ENCODE measurements at regions of chr19 and their contacts with region 1.

Region 1: DNA sequence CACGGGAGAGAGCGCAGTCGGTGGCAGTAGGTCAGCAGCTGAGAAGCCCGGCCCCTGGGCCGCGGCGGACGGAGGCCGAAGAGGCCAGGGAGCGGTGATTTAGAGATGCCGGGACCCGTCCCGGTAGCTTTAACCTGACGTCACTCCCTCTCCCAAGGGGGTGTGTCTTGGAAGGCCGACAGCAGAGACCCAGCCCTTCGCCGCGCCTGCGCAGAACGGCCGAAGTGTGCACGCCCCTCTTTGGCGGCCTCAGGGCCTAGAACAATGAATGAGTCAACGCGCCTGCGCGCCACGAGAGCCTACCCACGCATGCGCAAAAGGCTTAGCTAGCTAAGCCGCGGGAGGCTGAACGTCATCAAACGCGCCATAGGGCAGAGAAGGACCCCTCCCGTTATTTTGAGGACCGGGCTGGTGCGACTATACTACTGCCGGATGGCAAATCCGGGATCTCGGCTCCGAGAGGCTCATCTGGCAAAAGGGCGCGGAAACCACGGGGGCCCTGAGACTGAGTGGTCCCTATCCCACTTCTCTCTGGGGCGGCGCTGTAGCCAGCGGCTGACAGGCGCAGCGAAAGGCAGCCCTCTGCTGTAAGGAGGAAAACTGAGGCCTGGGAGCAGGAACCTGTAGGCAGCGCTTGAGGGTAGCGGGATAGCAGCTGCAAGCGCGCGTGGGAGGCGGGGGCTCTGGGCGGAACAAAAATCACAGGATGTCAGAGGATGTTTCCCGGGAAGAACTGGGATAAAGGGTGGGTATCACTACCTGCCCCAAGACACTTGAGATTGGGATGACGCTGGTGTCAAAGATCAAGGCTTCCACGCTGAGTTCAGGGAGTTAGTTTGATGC is at the starts of genes IRGQ and ZNF576:
- DNase-seq: peak; percentile 99
- H3K4me3 ChIP-seq: peak within 1 kb of the TSS; percentile 50 to 98
- H3K4me3 Mint-ChIP-seq: peak within 1 kb of the TSS; percentile 93 to 98 (median 95)
- H3K27ac ChIP-seq: peak within 1 kb of the TSS; percentile 93
- H3K27ac Mint-ChIP-seq: peak within 1 kb of the TSS; percentile 100
- H3K4me1 ChIP-seq: peaks cover 26% of the 10 kb centered on the region
- H3K4me1 Mint-ChIP-seq: peaks cover 24 to 49% (median 35%) of the 10 kb centered on the region in 4 donors
- H3K27me3 ChIP-seq: no peaks in the 10 kb centered on the region
- H3K27me3 Mint-ChIP-seq: no peaks in the 10 kb centered on the region
- total RNA-seq, gene IRGQ: 16.5 to 17.9 TPM
- total RNA-seq, gene ZNF576: 18.4 to 18.6 TPM

Region 2: DNA sequence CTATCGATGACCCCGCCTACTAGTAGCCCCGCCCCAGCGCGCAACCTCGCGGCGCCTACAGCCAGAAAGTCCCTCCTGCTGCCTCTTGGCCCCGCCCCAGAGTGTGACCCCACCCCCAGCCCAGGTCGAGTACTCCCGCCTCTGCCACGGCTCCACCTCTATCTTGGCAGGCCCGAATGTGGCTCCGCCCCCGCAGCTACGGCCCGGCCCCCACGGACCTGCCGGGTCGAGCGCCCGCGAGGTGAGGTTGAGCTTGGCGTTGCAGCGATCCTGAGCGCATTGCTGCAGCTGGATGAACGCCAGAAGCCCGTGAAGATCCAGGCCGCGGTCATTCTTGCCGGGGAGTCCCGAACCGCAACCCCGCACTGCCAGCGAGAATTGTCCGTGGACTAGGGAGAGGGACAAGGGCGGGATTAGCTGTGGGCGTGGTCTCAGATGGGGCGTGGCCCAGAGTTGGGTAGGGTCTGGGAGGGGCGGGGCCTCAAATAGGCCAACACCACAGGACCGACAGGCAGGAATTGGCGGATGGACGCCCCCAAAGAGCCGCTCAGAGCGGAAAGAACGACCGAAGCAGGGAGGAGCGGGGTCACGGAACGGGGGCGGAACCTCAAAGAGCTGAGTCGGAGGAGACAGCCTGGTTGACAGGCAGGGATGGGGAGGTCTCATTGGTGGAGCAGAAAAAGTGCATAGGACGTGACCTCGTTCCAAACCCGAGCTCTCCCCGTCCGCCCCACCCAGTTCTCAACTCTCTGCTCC is 132.7 kb before region 1 on chr19:
- CTCF ChIA-PET with region 1: interaction called, 8 read pairs
- POLR2A ChIA-PET with region 1: interaction called, 25 read pairs
- intact Hi-C with region 1: loop called (anchors 5 kb)
- DNase-seq: peak; percentile 98 to 100 (median 98)
- H3K4me3 ChIP-seq: peak overlapping the region; percentile 79 to 98
- H3K4me3 Mint-ChIP-seq: peak overlapping the region; percentile 90 to 98 (median 94)
- H3K27ac ChIP-seq: peak overlapping the region; percentile 80
- H3K27ac Mint-ChIP-seq: peak overlapping the region; percentile 95 to 100 (median 99)
- H3K4me1 ChIP-seq: peaks cover 34% of the 10 kb centered on the region
- H3K4me1 Mint-ChIP-seq: peaks cover 25 to 64% (median 43%) of the 10 kb centered on the region in 4 donors
- H3K27me3 ChIP-seq: no peaks in the 10 kb centered on the region
- H3K27me3 Mint-ChIP-seq: no peaks in the 10 kb centered on the region

Region 3: DNA sequence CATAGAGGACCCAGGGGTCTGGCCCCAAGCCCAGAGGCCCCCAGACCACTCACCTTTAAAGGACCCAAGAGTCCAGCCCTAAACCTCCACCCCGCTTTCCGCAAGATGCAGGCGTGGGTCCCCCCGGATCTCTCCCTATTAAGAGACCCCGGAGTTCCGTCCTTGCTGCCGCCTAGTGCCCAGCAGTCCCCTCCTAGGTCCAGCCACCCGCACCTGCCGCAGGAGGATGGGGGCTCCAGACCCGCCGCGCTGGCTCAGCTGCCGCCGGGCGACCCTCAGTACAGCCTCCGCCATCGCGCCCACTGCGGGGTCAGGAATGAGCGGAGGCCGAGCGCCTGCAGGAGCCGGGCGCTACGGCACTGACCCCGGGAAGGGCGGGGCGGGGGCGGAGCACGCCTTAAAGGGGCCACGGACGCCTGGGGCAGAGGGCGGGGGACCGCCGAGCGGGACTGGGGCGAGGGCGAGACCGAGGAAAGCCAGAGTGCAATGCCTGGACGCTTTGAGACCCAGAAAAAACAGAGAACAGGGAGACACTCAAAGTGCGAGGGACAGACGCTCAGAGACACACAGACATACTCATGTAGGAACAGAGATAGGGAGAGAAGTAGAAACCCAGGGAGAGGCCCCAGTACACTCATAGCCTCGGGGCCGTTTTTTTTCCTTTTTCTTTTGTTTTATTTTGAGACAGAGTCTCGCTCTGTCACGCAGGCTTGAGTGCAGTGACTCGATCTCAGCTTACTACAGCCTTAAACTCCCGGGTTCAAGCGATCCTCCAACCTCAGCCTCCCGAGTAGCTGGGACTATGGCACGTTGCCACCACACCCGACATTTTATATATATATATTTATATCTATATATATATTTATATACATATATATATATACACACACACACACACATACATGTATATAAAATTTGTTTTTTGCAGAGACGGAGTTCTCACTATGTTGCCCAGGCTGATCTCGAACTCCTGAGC is 69.0 kb before region 1 on chr19 and contains the start of gene ETHE1:
- CTCF ChIA-PET with region 1: interaction called, 16 read pairs
- POLR2A ChIA-PET with region 1: interaction called, 31 read pairs
- intact Hi-C with region 1: loop called (anchors 2 kb)
- DNase-seq: peak; percentile 52 to 68 (median 57)
- H3K4me3 ChIP-seq: peak within 1 kb of the TSS; percentile 60 to 90
- H3K4me3 Mint-ChIP-seq: peak within 1 kb of the TSS; percentile 75 to 94 (median 80)
- H3K27ac ChIP-seq: peak within 1 kb of the TSS; percentile 67
- H3K27ac Mint-ChIP-seq: peak within 1 kb of the TSS; percentile 37 to 94 (median 88)
- H3K4me1 ChIP-seq: peaks cover 27% of the 10 kb centered on the region
- H3K4me1 Mint-ChIP-seq: peaks cover 17 to 36% (median 22%) of the 10 kb centered on the region in 4 donors
- H3K27me3 ChIP-seq: no peaks in the 10 kb centered on the region
- H3K27me3 Mint-ChIP-seq: no peaks in the 10 kb centered on the region
- total RNA-seq, gene ETHE1: 23.9 to 29.1 TPM

Region 4: DNA sequence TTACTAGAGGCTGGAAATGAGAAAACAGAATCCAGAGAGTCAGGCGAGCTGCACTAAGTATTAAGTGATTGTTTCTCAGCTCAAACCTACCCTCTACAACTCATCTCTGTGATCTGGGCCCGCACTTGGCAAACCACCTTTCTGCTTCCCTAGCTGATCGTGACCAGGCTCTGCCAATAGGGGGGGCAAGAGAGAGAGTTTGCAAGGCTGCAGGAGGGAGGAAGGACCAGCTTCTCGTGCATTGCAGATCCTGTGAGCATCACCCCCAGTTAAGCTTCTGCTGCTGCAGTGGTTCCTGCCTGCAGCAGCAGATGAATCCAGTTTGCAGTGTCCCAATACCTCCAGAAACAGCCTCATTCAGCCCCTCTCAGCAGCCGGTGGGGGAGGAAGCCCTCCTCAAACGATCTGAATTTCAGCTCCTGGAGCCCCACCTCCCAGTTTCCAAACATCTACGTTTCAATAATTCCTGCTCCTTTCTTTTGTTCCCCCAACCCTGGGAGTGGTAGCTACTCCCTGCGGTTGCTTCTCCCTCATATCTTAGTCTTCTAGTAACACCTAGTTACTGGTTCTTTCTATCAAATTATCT is 40.9 kb before region 1 on chr19:
- CTCF ChIA-PET with region 1: interaction called, 245 read pairs
- POLR2A ChIA-PET with region 1: interaction called, 61 read pairs
- intact Hi-C with region 1: loop called (anchors 1 kb)
- DNase-seq: peak; percentile 81 to 85 (median 82)
- H3K4me3 ChIP-seq: no peak overlapping the region
- H3K4me3 Mint-ChIP-seq: peak overlapping the region in 2 of 8 donors; percentile 31 to 52
- H3K27ac ChIP-seq: no peak overlapping the region
- H3K27ac Mint-ChIP-seq: peak overlapping the region; percentile 6 to 85 (median 77)
- H3K4me1 ChIP-seq: peaks cover 7% of the 10 kb centered on the region
- H3K4me1 Mint-ChIP-seq: peaks cover 10 to 19% (median 12%) of the 10 kb centered on the region in 4 donors
- H3K27me3 ChIP-seq: no peaks in the 10 kb centered on the region
- H3K27me3 Mint-ChIP-seq: no peaks in the 10 kb centered on the region

Region 5: GRCh38 chr19:43570174-43570791 is 25.9 kb before region 1 on chr19:
- CTCF ChIA-PET with region 1: interaction called, 59 read pairs
- POLR2A ChIA-PET with region 1: interaction called, 49 read pairs
- intact Hi-C with region 1: loop called (anchors 1 kb)
- DNase-seq: no peak
- H3K4me3 ChIP-seq: no peak overlapping the region
- H3K4me3 Mint-ChIP-seq: no peak overlapping the region
- H3K27ac ChIP-seq: no peak overlapping the region
- H3K27ac Mint-ChIP-seq: peak overlapping the region in 6 of 7 donors; percentile 6 to 83 (median 53)
- H3K4me1 ChIP-seq: peaks cover 16% of the 10 kb centered on the region
- H3K4me1 Mint-ChIP-seq: peaks cover 21 to 56% (median 38%) of the 10 kb centered on the region in 4 donors
- H3K27me3 ChIP-seq: no peaks in the 10 kb centered on the region
- H3K27me3 Mint-ChIP-seq: no peaks in the 10 kb centered on the region

Region 6: DNA sequence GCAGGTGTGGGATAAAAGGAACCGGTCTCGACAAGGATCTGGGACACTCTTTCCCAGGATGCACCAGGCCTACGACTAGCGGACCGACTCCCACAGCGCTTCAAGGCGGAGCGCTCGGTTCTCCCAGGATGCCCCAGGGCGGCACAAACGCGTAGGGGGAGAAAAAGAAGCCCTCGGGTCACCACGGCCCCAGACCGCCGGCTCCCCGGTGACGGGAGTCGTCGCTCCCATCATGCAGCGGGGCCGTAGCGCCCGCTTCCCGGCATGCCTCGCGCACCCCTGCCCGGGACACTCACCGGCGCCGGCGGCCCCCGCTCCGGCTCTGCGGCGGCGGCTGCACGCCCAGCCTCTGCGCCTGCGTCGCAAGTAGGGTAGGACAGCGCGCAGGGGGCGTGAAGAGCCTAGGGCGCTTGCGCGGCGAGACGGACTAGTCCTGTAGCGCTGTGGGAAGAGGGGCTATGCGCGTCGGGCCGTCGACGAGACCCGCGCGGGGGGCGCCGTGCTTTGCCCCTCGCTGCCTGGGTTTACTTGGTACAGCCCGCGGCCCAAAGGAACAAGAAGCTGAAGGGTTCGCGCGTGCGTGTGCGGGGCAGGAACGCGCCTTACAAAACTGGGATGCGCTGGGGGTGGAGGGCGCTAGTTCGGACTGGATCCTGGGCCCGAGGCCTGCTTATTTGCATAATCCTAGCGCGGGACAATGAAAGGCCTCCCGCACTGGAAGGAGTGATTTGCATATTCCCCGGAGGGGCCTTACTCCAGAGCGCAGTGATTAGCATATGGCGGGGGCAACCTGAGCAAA is 23.2 kb after region 1 on chr19 and contains the start of gene ZNF428:
- CTCF ChIA-PET with region 1: interaction called, 8 read pairs
- POLR2A ChIA-PET with region 1: interaction called, 15 read pairs
- intact Hi-C with region 1: loop called (anchors 1 kb)
- DNase-seq: peak; percentile 85 to 88 (median 88)
- H3K4me3 ChIP-seq: peak within 1 kb of the TSS; percentile 90 to 97
- H3K4me3 Mint-ChIP-seq: peak within 1 kb of the TSS; percentile 96 to 98 (median 98)
- H3K27ac ChIP-seq: peak within 1 kb of the TSS; percentile 77
- H3K27ac Mint-ChIP-seq: peak within 1 kb of the TSS; percentile 95 to 99 (median 98)
- H3K4me1 ChIP-seq: peaks cover 29% of the 10 kb centered on the region
- H3K4me1 Mint-ChIP-seq: peaks cover 11 to 40% (median 27%) of the 10 kb centered on the region in 4 donors
- H3K27me3 ChIP-seq: no peaks in the 10 kb centered on the region
- H3K27me3 Mint-ChIP-seq: no peaks in the 10 kb centered on the region
- total RNA-seq, gene ZNF428: 27.7 to 28.2 TPM

Region 7: GRCh38 chr19:43668406-43669158 is 72.4 kb after region 1 on chr19:
- CTCF ChIA-PET with region 1: interaction called, 19 read pairs
- POLR2A ChIA-PET with region 1: interaction called, 17 read pairs
- intact Hi-C with region 1: loop called (anchors 1 kb)
- DNase-seq: peak; percentile 95 to 99 (median 97)
- H3K4me3 ChIP-seq: peak overlapping the region; percentile 68 to 76
- H3K4me3 Mint-ChIP-seq: peak overlapping the region; percentile 86 to 95 (median 92)
- H3K27ac ChIP-seq: peak overlapping the region; percentile 61
- H3K27ac Mint-ChIP-seq: peak overlapping the region; percentile 84 to 97 (median 95)
- H3K4me1 ChIP-seq: peaks cover 36% of the 10 kb centered on the region
- H3K4me1 Mint-ChIP-seq: peaks cover 32 to 58% (median 42%) of the 10 kb centered on the region in 4 donors
- H3K27me3 ChIP-seq: no peaks in the 10 kb centered on the region
- H3K27me3 Mint-ChIP-seq: no peaks in the 10 kb centered on the region

Region 8: GRCh38 chr19:43687660-43687997 is 91.4 kb after region 1 on chr19:
- CTCF ChIA-PET with region 1: no interaction called
- POLR2A ChIA-PET with region 1: no interaction called
- intact Hi-C with region 1: no loop called
- DNase-seq: no peak
- H3K4me3 ChIP-seq: no peak overlapping the region
- H3K4me3 Mint-ChIP-seq: no peak overlapping the region
- H3K27ac ChIP-seq: no peak overlapping the region
- H3K27ac Mint-ChIP-seq: no peak overlapping the region
- H3K4me1 ChIP-seq: no peaks in the 10 kb centered on the region
- H3K4me1 Mint-ChIP-seq: no peaks in the 10 kb centered on the region
- H3K27me3 ChIP-seq: no peaks in the 10 kb centered on the region
- H3K27me3 Mint-ChIP-seq: no peaks in the 10 kb centered on the region

Measured in CD4-positive, alpha-beta memory T cell (primary cell).